Aorta (tissue), 5 donors: ENCODE measurements at regions of chr10 and their contacts with region 1.

Region 1: GRCh38 chr10:48363617-48364355 is 57.3 kb downstream of the MAPK8 start:
- DNase-seq: no peak
- ATAC-seq: no peak
- H3K4me3 ChIP-seq: no peak overlapping the region
- H3K27ac ChIP-seq: no peak overlapping the region
- H3K4me1 ChIP-seq: peaks cover 0 to 1% of the 10 kb centered on the region in 2 donors
- H3K27me3 ChIP-seq: no peaks in the 10 kb centered on the region

Region 2: GRCh38 chr10:48506147-48506917 is 142.5 kb after region 1 on chr10:
- intact Hi-C with region 1: loop called in 1 of 2 experiments (anchors 10 kb)
- DNase-seq: no peak
- ATAC-seq: no peak
- H3K4me3 ChIP-seq: no peak overlapping the region
- H3K27ac ChIP-seq: no peak overlapping the region
- H3K4me1 ChIP-seq: no peaks in the 10 kb centered on the region
- H3K27me3 ChIP-seq: no peaks in the 10 kb centered on the region

Region 3: GRCh38 chr10:48541144-48541795 is 177.5 kb after region 1 on chr10:
- intact Hi-C with region 1: loop called in 1 of 2 experiments (anchors 10 kb)
- DNase-seq: no peak
- ATAC-seq: peak; percentile 31
- H3K4me3 ChIP-seq: no peak overlapping the region
- H3K27ac ChIP-seq: no peak overlapping the region
- H3K4me1 ChIP-seq: no peaks in the 10 kb centered on the region
- H3K27me3 ChIP-seq: no peaks in the 10 kb centered on the region

Region 4: DNA sequence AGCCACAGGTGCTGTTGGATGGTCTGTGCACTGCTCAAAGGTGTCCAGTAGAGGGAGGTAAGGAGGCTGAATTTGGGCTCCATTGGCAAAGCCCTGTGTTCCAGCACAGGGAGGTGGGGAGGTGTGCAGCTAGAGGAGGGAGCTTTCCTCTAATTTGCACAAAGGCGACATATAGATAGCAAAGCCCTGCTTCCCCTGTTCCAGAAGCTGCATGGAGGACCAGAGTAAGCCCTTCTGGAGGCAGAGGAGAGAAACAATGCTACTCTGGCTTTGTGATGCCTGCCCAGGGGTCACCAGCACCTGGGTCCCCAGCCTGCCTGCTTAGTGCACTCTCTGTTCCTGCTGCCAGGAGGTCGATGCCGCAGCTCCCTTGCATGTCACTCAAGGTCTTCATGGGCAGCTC is 244.5 kb after region 1 on chr10:
- intact Hi-C with region 1: loop called in 1 of 2 experiments (anchors 5 kb)
- DNase-seq: no peak
- ATAC-seq: no peak
- H3K4me3 ChIP-seq: no peak overlapping the region
- H3K27ac ChIP-seq: no peak overlapping the region
- H3K4me1 ChIP-seq: no peaks in the 10 kb centered on the region
- H3K27me3 ChIP-seq: no peaks in the 10 kb centered on the region

Region 5: DNA sequence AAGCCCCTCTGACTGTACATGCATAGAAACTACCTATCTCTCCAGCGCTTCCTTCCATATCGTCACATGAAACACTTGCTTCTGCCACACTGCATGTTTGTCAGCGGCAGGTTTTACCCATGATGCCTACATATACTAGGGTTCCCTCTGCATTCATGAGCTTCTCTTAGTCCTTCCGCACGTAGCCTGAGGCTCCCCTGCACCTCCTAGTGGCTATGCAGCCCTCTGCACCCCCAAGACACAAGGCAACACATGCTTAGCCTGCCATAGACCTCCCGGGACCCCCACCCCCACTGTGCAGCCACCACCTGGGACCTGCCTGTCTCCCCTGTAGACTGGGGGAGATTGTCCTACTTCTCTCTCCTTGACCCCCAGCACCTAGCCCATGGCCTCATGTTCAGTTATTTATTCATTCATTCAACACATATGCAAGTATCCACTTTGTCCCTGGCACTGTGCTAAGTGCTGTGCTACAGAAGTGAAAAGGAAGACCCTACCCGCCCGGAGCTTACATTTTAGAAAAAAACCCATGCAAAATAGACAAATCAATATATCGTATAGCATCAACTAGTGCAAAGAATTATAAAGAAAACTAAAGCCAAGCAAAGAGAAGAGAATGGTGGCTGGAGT is 800.9 kb after region 1 on chr10:
- intact Hi-C with region 1: loop called in 1 of 2 experiments (anchors 10 kb)
- DNase-seq: no peak
- ATAC-seq: no peak
- H3K4me3 ChIP-seq: no peak overlapping the region
- H3K27ac ChIP-seq: no peak overlapping the region
- H3K4me1 ChIP-seq: no peaks in the 10 kb centered on the region
- H3K27me3 ChIP-seq: no peaks in the 10 kb centered on the region